ENCODE measurements at regions of chr13 and their contacts with region 1.

Region 1: GRCh38 chr13:91785431-91786119 is 387.2 kb downstream of the GPC5 start:
- DNase-seq: no peak
- ATAC-seq: no peak
- H3K4me3 ChIP-seq: no peak overlapping the region
- H3K27ac ChIP-seq: no peak overlapping the region
- H3K4me1 ChIP-seq: no peaks in the 10 kb centered on the region
- H3K27me3 ChIP-seq: no peaks in the 10 kb centered on the region
- CTCF ChIP-seq: no peak

Region 2: GRCh38 chr13:91133941-91134802 is 651.4 kb before region 1 on chr13:
- intact Hi-C with region 1: loop called in 1 of 10 experiments (anchors 5 kb)
- DNase-seq: peak in 1 of 2 donors; percentile 48
- ATAC-seq: peak in 7 of 8 donors; percentile 46 to 77 (median 67)
- H3K4me3 ChIP-seq: no peak overlapping the region
- H3K27ac ChIP-seq: no peak overlapping the region
- H3K4me1 ChIP-seq: peaks cover 0 to 11% (median 0%) of the 10 kb centered on the region in 9 donors
- H3K27me3 ChIP-seq: no peaks in the 10 kb centered on the region
- CTCF ChIP-seq: peak; percentile 36 to 81 (median 73)

Region 3: DNA sequence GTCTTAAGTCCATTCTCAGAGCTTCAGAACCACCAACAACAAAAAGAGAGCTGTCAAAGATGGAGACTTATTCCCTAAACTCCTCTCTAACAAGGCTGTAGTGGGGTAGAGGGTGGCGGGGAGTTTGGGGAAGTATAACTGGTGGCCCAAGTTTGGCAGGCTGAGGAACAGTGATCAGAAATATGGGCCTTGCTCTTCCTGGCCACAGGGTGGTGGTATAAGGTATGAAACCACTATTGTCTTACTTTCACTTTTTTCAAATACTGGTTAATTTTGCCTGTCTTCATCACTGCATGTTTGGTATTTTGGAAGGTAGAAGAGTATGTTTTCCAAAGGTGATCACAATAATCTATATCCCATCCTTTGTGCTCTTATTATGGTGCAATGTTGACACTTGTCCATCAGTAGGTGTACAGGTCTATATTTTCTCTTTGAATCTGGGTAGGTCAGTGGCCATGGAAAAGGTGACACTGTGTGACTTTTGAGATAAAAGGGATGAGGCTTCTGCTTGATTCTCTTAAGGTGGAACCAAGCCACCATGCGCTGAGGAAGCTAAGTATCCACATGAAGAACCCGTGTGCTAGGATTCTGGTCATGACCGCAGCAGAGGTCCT is 410.4 kb before region 1 on chr13:
- intact Hi-C with region 1: loop called in 5 of 10 experiments (anchors 5 to 10 kb)
- DNase-seq: no peak
- ATAC-seq: peak in 1 of 8 donors; percentile 51
- H3K4me3 ChIP-seq: no peak overlapping the region
- H3K27ac ChIP-seq: no peak overlapping the region
- H3K4me1 ChIP-seq: no peaks in the 10 kb centered on the region
- H3K27me3 ChIP-seq: no peaks in the 10 kb centered on the region
- CTCF ChIP-seq: peak in 7 of 9 donors; percentile 24 to 47 (median 27)

Region 4: GRCh38 chr13:91381371-91381770 is 404.2 kb before region 1 on chr13:
- intact Hi-C with region 1: loop called in 5 of 10 experiments (anchors 5 to 10 kb)
- DNase-seq: no peak
- ATAC-seq: no peak
- H3K4me3 ChIP-seq: no peak overlapping the region
- H3K27ac ChIP-seq: no peak overlapping the region
- H3K4me1 ChIP-seq: no peaks in the 10 kb centered on the region
- H3K27me3 ChIP-seq: peaks cover 0 to under 1% (median 0%) of the 10 kb centered on the region in 7 donors
- CTCF ChIP-seq: peak in 6 of 9 donors; percentile 26 to 52 (median 47)

Measured in heart right ventricle (tissue), 16 donors.